ENCODE measurements at regions of chr2 and their contacts with region 1.

Region 1: GRCh38 chr2:142989273-142990204 is 112.1 kb downstream of the KYNU start:
- H3K4me3 ChIP-seq: no peak overlapping the region
- H3K27ac ChIP-seq: no peak overlapping the region
- H3K4me1 ChIP-seq: peaks cover 15% of the 10 kb centered on the region
- CTCF ChIP-seq: 0 out of 2 replicates have a peak, but pooled peaks have one; percentile 11

Region 2: DNA sequence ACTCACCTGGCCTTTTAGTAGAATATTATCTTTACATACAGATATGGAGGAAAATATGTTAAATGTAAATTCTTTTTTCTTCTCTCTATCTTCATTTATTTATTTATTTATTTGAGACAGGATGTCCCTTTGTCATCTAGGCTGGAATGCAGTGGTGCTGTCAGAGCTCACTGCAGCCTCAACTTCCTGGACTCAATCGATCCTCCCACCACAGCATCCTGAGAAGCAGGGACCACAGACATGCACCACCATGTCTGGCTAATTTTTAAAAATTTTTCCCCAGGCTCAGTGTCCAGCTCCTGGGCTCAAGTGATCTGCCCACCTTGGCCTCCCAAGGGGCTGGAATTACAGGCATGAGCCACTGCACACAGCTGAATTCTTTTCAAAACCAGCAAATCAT is 91.7 kb before region 1 on chr2:
- CTCF ChIA-PET with region 1: interaction called, 11 read pairs
- POLR2A ChIA-PET with region 1: no interaction called
- H3K4me3 ChIP-seq: no peak overlapping the region
- H3K27ac ChIP-seq: no peak overlapping the region
- H3K4me1 ChIP-seq: no peaks in the 10 kb centered on the region
- CTCF ChIP-seq: no peak

Region 3: DNA sequence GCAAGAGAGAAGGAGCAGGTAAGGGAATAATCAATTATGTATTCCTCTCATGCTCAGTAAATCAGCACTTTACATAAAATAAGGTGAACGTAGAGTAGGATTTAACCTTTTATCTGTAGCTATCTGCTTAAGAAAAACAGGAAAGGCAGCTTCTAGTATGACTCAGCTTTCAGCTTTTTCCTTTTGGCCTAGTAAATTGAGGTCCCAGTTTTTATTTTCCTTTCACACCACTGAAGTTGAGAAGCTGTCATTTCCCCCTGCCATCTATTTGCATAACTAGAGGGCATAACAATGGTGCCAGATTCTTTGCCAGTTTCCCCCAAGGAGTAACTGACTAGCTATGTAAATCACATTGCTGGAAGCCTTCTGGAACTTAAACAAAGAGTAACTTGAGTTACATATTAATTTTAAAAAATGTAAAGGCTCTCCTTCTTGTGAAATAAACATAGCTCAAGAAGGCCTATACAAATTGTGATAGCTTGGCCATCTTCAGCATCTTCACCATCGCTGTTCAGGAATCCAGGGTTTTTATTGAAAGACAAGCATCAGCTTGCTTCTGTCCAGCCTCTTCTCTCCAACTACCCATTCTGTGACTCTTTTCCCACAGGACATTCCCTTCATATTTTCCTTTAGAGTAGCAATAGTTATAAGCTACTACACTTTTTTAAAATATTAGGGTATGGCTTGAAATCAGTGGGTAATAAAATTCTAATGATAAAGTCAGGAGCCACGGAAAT is 15.1 kb before region 1 on chr2:
- CTCF ChIA-PET with region 1: interaction called, 18 read pairs
- POLR2A ChIA-PET with region 1: no interaction called
- H3K4me3 ChIP-seq: no peak overlapping the region
- H3K27ac ChIP-seq: no peak overlapping the region
- H3K4me1 ChIP-seq: no peaks in the 10 kb centered on the region; the same call in 1 of the 2 replicates
- CTCF ChIP-seq: no peak

Measured in HEK293 (cell line).